MCF 10A (cell line): ENCODE measurements at regions of chr14 and their contacts with region 1.

Region 1: DNA sequence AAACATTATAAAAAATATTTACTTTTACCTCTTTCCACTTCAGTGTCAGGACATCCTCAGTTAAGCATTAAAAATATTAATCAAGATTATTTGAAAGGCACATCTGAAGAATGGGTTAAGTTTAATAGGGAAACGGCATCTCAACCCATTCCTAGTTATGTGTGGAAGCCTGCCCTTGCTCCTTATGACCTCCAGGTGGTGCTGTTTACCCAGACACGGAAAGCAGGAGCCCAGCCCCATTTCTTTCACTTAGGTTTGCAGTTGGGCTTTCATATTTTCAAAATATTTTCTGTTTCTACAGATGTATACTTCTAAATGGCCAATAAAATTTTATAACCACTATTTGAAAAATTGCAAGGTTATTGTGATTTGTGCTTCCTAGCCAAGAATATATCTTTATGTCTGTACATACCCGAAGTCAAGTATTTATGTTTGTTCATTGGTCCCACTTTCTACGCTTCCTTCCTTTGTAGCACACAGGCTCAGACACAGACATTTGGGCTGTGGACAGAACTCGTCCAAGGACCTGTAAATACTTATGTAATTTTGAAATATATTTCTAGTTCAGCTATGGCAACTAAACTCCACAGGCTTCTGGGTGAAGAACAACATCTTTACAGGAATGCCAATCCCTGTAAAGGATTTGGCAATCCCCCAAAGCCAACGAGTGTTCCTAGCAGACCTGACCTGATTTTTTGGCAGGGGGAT is 247.1 kb downstream of the AKAP6 start:
- DNase-seq: peak; percentile 73
- H3K4me3 Mint-ChIP-seq: no peak overlapping the region
- H3K27ac Mint-ChIP-seq: no peak overlapping the region
- H3K4me1 Mint-ChIP-seq: no peaks in the 10 kb centered on the region
- H3K27me3 Mint-ChIP-seq: peaks cover 13% of the 10 kb centered on the region
- CTCF ChIP-seq: peak; percentile 97

Region 2: DNA sequence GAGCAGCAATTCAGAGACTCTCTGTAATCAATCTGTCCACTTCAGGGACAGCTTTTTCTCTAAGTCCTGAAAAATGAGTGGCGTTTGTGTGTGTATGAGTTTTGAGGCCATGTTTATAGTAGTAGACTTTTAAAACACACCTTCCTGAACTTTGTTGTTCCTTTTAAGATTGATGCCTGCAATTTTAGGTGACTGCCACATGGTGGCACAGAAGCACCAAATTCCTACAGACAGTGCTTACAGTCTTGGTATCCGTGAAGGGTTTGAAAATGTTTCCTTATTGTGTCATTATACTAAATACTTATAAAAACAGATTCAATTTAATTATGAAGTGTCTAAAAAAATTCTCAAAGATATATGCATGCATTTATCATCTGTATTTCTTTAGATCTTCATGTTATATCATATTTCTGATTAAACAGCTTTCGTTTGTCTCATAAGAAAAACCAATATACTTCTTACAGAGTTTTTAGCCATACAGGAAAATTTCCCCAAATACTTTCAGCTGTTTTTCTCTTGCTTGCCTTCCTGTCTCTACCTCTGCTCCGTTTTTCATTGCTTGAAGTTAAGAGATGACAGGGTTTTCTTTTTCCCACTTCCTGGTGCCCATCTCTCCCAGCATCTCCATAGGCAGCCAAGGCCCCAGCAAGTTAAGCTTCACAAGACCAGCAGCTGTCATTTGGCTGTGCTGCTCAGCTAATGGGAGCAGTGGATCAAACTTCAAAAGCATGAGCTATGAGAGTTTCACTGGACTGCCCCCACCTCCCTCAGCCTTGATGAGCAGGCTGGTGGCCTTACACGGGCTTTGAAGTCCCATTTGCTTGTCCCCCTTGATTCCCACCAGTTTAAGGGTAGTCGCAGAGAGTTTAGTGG is 12.4 kb after region 1 on chr14:
- CTCF ChIA-PET with region 1: interaction called, 26 read pairs
- POLR2A ChIA-PET with region 1: no interaction called
- intact Hi-C with region 1: no loop called
- DNase-seq: peak; percentile 67
- H3K4me3 Mint-ChIP-seq: no peak overlapping the region
- H3K27ac Mint-ChIP-seq: no peak overlapping the region
- H3K4me1 Mint-ChIP-seq: peaks cover 9% of the 10 kb centered on the region
- H3K27me3 Mint-ChIP-seq: no peaks in the 10 kb centered on the region
- CTCF ChIP-seq: peak; percentile 84

Region 3: DNA sequence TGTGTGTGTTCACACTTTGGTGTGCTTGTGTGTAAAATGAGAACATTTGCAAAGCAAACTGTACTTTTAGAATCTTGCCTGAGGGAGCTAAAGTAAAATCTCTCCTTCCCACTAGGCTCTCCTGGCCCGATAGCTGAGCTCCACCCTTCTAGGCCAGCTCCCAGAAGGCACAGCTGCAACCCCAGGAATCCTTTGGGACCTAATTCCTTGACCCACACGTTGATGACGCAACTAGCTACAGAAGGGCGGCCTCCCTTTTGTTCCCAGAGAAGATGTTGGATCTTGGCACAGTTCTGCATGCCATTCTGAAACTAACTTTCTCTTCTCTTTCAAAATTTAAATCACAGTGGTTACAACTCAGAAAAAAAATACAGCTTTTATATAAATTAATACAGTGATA is 1106.5 kb after region 1 on chr14:
- CTCF ChIA-PET with region 1: no interaction called
- POLR2A ChIA-PET with region 1: no interaction called
- intact Hi-C with region 1: loop called (anchors 10 kb)
- DNase-seq: peak; percentile 91
- H3K4me3 Mint-ChIP-seq: no peak overlapping the region
- H3K27ac Mint-ChIP-seq: peak overlapping the region; percentile 13
- H3K4me1 Mint-ChIP-seq: peaks cover 40% of the 10 kb centered on the region
- H3K27me3 Mint-ChIP-seq: no peaks in the 10 kb centered on the region
- CTCF ChIP-seq: no peak

Region 4: DNA sequence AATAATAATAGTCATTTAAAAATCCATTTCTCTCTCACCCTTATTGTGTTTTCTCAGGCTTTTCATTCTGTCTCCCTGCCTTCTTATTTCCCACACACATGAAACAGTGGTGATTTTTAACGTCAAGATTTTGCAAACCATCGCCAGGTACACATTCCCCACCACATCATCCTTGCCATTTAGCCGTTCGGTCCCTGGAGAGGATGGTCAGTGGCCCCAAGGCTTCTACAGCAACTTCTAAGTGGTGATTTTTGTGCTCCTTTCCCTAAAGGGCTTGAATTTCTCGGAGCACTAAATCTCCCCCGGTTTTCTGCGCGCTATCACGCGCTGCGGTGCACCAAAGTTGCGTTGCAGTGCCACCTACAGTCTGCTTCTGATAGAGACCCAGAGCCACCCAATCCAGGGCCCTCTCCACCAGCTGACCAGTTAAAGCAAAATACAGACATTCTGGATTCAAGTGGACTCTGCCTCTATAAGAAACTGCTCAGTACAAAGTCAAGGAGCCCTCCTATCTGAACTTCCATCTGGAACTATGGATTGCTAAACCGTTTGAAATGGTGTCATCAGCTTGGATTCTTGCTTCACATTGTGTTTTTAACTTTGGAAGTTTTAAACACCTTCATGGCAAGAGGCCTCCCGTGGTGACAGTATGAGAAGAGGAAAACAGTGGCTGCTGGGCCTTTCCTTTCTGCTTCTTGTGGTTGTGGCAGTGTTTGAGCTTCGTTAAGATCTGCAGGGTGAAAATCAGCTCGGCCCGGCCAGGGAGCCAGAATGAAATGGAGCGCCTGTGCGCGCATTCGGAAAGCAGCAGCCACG is 1651.8 kb after region 1 on chr14:
- CTCF ChIA-PET with region 1: no interaction called
- POLR2A ChIA-PET with region 1: no interaction called
- intact Hi-C with region 1: loop called (anchors 1 kb)
- DNase-seq: peak; percentile 70
- H3K4me3 Mint-ChIP-seq: peak overlapping the region; percentile 46
- H3K27ac Mint-ChIP-seq: peak overlapping the region; percentile 50
- H3K4me1 Mint-ChIP-seq: peaks cover 31% of the 10 kb centered on the region
- H3K27me3 Mint-ChIP-seq: no peaks in the 10 kb centered on the region
- CTCF ChIP-seq: peak; percentile 76

Region 5: GRCh38 chr14:34322940-34323418 is 1746.7 kb after region 1 on chr14:
- CTCF ChIA-PET with region 1: interaction called, 16 read pairs
- POLR2A ChIA-PET with region 1: interaction called, 5 read pairs
- intact Hi-C with region 1: loop called (anchors 1 kb)
- DNase-seq: peak; percentile 85
- H3K4me3 Mint-ChIP-seq: no peak overlapping the region
- H3K27ac Mint-ChIP-seq: no peak overlapping the region
- H3K4me1 Mint-ChIP-seq: peaks cover 10% of the 10 kb centered on the region
- H3K27me3 Mint-ChIP-seq: no peaks in the 10 kb centered on the region
- CTCF ChIP-seq: peak; percentile 75